ENCODE measurements at regions of chr9 and their contacts with region 1.

Region 1: GRCh38 chr9:125752070-125752628 is 5.0 kb downstream of the PBX3 start:
- DNase-seq: no peak
- ATAC-seq: no peak
- H3K4me3 ChIP-seq: no peak overlapping the region
- H3K4me3 Mint-ChIP-seq: no peak overlapping the region
- H3K27ac ChIP-seq: no peak overlapping the region
- H3K27ac Mint-ChIP-seq: no peak overlapping the region
- H3K4me1 ChIP-seq: peaks cover 11% of the 10 kb centered on the region
- H3K4me1 Mint-ChIP-seq: peaks cover 26% of the 10 kb centered on the region
- H3K27me3 ChIP-seq: no peaks in the 10 kb centered on the region
- H3K27me3 Mint-ChIP-seq: no peaks in the 10 kb centered on the region
- CTCF ChIP-seq: no peak

Region 2: DNA sequence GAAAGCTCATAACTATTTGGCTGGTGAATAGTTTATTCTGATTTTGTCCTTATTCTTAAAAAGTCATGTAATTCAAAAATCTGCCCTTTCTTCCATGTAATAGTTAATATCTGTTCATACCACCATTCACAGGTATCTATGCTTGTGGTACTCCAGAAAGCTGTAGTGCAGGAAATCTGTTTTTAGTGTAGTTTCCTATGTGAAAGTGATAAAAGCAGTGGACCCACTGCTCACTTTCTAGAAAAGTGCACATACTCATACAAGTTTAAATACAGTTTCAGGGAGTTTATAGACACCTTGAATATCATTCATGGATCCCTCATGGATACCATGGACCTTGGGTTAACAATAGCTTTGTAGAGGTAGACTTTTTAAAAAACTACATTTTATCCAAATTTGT is 15.2 kb after region 1 on chr9:
- CTCF ChIA-PET with region 1: no interaction called
- POLR2A ChIA-PET with region 1: interaction called, 3 read pairs
- intact Hi-C with region 1: loop called in 1 of 2 experiments (anchors 2 kb)
- DNase-seq: no peak
- ATAC-seq: no peak
- H3K4me3 ChIP-seq: no peak overlapping the region
- H3K4me3 Mint-ChIP-seq: no peak overlapping the region
- H3K27ac ChIP-seq: no peak overlapping the region
- H3K27ac Mint-ChIP-seq: no peak overlapping the region
- H3K4me1 ChIP-seq: no peaks in the 10 kb centered on the region
- H3K4me1 Mint-ChIP-seq: peaks cover 9% of the 10 kb centered on the region
- H3K27me3 ChIP-seq: no peaks in the 10 kb centered on the region
- H3K27me3 Mint-ChIP-seq: no peaks in the 10 kb centered on the region
- CTCF ChIP-seq: no peak